ENCODE measurements at regions of chr6 and their contacts with region 1.

Region 1: DNA sequence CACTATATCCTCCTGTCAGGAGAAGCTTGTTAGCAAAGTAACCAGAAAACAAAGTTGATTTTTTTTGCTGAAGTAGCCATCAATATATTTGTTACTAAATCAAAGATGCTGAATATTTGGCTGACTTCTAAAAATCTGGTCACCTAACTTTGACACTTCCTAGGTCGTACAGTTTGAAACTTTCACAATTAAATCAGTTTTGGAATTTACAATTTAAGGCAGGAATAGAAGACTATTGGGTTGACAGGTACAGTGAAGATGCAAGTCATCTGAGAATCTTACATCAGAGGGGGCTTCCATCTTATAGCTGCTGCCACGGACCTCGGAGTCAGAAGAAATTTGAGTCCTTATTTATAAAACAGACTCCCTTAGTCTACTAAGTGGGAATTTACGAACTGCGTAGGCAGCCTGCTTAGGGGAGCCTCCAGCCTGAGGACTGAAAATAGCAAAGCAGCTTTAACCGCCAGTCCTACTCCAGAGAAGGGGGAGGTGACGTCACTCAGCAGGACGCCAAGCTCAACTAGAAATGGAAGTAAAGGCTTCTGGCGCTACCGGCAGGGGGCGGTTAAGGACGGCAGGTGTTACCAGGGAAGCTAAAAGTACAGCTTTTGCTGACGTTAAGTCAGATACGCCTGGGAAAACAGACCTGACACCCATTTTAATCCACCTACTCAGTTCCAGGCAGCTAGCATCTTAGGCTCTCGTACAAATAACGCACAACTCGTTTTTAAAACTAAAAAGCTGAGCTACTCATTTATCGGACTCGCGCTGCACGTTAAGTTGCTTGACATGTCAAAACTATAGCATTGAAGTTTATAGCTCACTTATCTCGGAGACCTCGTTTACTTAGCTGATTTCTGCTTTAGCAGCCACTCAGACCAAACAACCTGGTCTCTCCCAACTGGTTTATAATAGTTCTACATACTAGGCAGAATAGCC is 61.1 kb upstream of the HFE start:
- DNase-seq: peak; percentile 82 to 98 (median 95)
- ATAC-seq: peak; percentile 60
- H3K4me3 ChIP-seq: peak overlapping the region; percentile 75
- H3K4me3 Mint-ChIP-seq: peak overlapping the region; percentile 81 to 99 (median 94)
- H3K27ac ChIP-seq: peak overlapping the region; percentile 94
- H3K27ac Mint-ChIP-seq: peak overlapping the region; percentile 93 to 100 (median 98)
- H3K4me1 ChIP-seq: peaks cover 11 to 22% of the 10 kb centered on the region in 2 donors
- H3K4me1 Mint-ChIP-seq: peaks cover 12 to 81% (median 50%) of the 10 kb centered on the region in 7 donors
- H3K27me3 ChIP-seq: no peaks in the 10 kb centered on the region
- H3K27me3 Mint-ChIP-seq: peaks cover 0 to 9% (median 0%) of the 10 kb centered on the region in 5 donors

Region 2: DNA sequence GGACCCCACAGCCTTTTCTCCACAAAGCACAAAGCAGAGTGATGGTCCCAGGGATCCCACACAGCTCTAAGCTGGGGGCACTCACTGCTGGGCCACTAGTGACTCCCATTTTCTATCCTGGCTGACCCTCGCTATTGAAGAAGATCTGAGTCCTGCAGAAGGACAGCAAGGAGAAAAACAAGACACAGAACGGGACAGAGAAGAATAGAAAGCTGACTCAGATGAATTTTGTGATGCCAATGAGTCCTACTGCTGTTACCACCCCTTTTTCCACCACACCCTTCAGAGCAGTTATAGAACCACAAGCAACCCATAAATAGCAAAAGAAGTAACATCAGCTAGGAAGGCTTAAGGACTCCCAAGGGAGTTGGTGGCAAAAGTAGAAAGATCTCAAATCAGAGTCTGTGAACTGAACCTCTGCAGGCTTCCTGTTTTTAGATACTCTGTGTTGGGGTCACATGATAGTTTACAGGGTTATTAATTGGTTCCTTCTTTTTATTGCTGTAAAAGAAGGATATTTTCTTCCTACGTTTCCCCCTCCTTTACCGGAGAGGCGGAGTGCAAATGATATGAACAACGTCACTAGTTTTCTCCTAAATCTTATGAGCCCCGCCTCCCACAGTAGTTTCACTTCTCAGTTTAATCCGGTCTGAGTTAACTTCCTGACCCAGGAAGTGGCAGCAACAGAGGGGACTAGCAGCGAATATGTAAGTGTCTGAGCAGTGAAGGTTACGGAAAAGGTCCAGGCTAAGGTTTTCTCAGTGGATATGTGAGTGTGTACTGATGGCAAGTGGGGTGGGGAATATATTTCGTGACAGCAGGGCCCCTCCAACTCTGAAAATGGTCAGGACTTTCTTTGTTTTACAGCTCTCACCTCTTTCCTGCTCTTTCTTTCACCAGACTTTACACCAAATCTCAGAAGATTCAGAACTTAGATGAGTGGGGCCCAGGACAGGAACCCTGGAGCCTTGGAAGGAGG is 63.7 kb before region 1 on chr6 and contains the start of gene TRIM38:
- CTCF ChIA-PET with region 1: no interaction called
- POLR2A ChIA-PET with region 1: interaction called, 41 read pairs
- intact Hi-C with region 1: loop called (anchors 1 kb)
- DNase-seq: peak; percentile 22 to 90 (median 85)
- ATAC-seq: peak; percentile 95
- H3K4me3 ChIP-seq: peak within 1 kb of the TSS; percentile 73
- H3K4me3 Mint-ChIP-seq: peak within 1 kb of the TSS; percentile 92 to 100 (median 97)
- H3K27ac ChIP-seq: peak within 1 kb of the TSS; percentile 97
- H3K27ac Mint-ChIP-seq: peak within 1 kb of the TSS; percentile 97 to 100 (median 98)
- H3K4me1 ChIP-seq: peaks cover 61 to 75% of the 10 kb centered on the region in 2 donors
- H3K4me1 Mint-ChIP-seq: peaks cover 61 to 89% (median 84%) of the 10 kb centered on the region in 7 donors
- H3K27me3 ChIP-seq: no peaks in the 10 kb centered on the region
- H3K27me3 Mint-ChIP-seq: no peaks in the 10 kb centered on the region
- total RNA-seq, gene TRIM38: 17.4 to 32.8 (median 29.9) TPM

Region 3: DNA sequence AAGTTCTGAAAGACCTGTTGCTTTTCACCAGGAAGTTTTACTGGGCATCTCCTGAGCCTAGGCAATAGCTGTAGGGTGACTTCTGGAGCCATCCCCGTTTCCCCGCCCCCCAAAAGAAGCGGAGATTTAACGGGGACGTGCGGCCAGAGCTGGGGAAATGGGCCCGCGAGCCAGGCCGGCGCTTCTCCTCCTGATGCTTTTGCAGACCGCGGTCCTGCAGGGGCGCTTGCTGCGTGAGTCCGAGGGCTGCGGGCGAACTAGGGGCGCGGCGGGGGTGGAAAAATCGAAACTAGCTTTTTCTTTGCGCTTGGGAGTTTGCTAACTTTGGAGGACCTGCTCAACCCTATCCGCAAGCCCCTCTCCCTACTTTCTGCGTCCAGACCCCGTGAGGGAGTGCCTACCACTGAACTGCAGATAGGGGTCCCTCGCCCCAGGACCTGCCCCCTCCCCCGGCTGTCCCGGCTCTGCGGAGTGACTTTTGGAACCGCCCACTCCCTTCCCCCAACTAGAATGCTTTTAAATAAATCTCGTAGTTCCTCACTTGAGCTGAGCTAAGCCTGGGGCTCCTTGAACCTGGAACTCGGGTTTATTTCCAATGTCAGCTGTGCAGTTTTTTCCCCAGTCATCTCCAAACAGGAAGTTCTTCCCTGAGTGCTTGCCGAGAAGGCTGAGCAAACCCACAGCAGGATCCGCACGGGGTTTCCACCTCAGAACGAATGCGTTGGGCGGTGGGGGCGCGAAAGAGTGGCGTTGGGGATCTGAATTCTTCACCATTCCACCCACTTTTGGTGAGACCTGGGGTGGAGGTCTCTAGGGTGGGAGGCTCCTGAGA is 61.3 kb after region 1 on chr6 and contains the start of gene HFE:
- CTCF ChIA-PET with region 1: no interaction called
- POLR2A ChIA-PET with region 1: interaction called, 35 read pairs
- intact Hi-C with region 1: no loop called
- DNase-seq: peak in 8 of 9 donors; percentile 32 to 46 (median 38)
- ATAC-seq: peak; percentile 41
- H3K4me3 ChIP-seq: peak within 1 kb of the TSS; percentile 88
- H3K4me3 Mint-ChIP-seq: peak within 1 kb of the TSS; percentile 84 to 91 (median 88)
- H3K27ac ChIP-seq: peak within 1 kb of the TSS; percentile 72
- H3K27ac Mint-ChIP-seq: peak within 1 kb of the TSS; percentile 73 to 91 (median 84)
- H3K4me1 ChIP-seq: peaks cover 18 to 23% of the 10 kb centered on the region in 2 donors
- H3K4me1 Mint-ChIP-seq: peaks cover 31 to 51% (median 39%) of the 10 kb centered on the region in 7 donors
- H3K27me3 ChIP-seq: no peaks in the 10 kb centered on the region
- H3K27me3 Mint-ChIP-seq: peaks cover 0 to 5% (median 5%) of the 10 kb centered on the region in 5 donors
- total RNA-seq, gene HFE: 1.5 to 4.6 (median 2.5) TPM

Region 4: DNA sequence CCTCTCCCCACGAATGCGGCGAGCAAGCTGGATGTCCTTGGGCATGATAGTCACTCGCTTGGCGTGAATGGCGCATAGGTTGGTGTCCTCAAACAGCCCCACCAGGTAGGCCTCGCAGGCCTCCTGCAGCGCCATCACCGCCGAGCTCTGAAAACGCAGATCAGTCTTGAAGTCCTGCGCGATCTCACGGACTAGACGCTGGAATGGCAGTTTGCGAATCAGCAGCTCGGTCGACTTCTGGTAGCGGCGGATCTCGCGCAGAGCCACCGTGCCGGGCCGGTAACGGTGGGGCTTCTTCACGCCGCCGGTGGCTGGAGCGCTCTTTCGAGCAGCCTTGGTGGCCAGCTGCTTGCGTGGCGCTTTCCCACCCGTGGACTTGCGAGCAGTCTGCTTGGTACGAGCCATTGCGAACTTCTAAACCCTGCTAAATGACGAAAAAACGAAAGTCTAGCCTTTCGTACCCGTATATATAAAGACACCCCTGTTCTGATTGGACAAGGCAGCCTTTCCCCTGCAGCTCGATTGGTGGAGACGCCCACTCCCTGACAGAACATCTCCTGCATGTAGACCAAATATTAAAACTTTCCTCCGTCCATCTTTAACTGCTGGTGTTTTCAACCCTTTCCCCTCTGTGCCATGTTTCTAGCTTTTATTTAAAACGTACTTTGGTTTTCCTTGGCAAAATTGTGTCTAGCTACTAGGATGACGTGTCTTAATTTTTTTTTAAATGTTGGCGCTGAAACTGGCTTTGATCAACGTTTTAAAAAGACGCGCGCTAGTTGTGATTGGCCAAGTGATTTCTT is 170.9 kb after region 1 on chr6:
- CTCF ChIA-PET with region 1: interaction called, 3 read pairs
- POLR2A ChIA-PET with region 1: interaction called, 292 read pairs
- intact Hi-C with region 1: no loop called
- DNase-seq: peak; percentile 55 to 95 (median 93)
- ATAC-seq: peak; percentile 73
- H3K4me3 ChIP-seq: peak overlapping the region; percentile 92
- H3K4me3 Mint-ChIP-seq: peak overlapping the region; percentile 85 to 99 (median 96)
- H3K27ac ChIP-seq: peak overlapping the region; percentile 91
- H3K27ac Mint-ChIP-seq: peak overlapping the region; percentile 96 to 100 (median 98)
- H3K4me1 ChIP-seq: peaks cover 10 to 12% of the 10 kb centered on the region in 2 donors
- H3K4me1 Mint-ChIP-seq: peaks cover 23 to 65% (median 42%) of the 10 kb centered on the region in 7 donors
- H3K27me3 ChIP-seq: no peaks in the 10 kb centered on the region
- H3K27me3 Mint-ChIP-seq: peaks cover 0 to 12% (median 0%) of the 10 kb centered on the region in 5 donors

Region 5: DNA sequence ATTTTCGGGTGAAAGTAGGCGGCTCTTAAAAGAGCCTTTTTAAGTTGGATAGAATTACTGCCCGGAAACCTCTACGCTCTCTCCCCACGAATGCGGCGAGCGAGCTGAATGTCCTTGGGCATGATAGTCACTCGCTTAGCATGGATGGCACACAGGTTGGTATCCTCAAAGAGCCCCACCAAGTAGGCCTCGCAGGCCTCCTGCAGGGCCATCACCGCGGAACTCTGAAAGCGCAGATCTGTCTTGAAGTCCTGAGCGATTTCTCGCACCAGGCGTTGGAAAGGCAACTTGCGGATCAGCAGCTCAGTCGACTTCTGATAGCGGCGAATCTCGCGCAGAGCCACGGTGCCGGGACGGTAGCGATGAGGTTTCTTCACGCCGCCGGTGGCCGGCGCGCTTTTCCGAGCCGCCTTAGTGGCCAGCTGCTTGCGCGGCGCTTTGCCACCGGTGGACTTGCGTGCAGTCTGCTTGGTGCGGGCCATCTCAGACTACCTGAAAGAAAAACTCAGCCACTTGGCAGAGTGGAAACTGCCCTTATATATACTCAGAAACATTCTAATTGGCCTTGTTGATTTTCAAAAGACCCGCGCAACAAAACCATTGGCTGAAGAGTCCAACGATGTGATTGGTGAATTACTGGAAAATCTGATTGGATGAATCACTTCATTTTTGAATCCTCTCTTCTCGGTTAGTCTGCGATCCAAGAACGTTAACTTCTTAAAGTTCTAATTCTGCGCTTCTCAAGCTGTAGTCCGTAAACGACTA is 244.9 kb after region 1 on chr6:
- CTCF ChIA-PET with region 1: no interaction called
- POLR2A ChIA-PET with region 1: interaction called, 34 read pairs
- intact Hi-C with region 1: loop called in 1 of 2 experiments (anchors 5 kb)
- DNase-seq: peak; percentile 50 to 89 (median 85)
- ATAC-seq: peak; percentile 24
- H3K4me3 ChIP-seq: peak overlapping the region; percentile 83
- H3K4me3 Mint-ChIP-seq: no peak overlapping the region
- H3K27ac ChIP-seq: peak overlapping the region; percentile 82
- H3K27ac Mint-ChIP-seq: peak overlapping the region in 2 of 9 donors; percentile 10 to 91
- H3K4me1 ChIP-seq: peaks cover 6 to 27% of the 10 kb centered on the region in 2 donors
- H3K4me1 Mint-ChIP-seq: peaks cover 0 to 34% (median 15%) of the 10 kb centered on the region in 7 donors
- H3K27me3 ChIP-seq: no peaks in the 10 kb centered on the region
- H3K27me3 Mint-ChIP-seq: no peaks in the 10 kb centered on the region

Region 6: GRCh38 chr6:27472617-27473400 is 1446.6 kb after region 1 on chr6 and contains the start of gene ZNF184:
- CTCF ChIA-PET with region 1: no interaction called
- POLR2A ChIA-PET with region 1: interaction called, 3 read pairs
- intact Hi-C with region 1: loop called (anchors 2 to 10 kb)
- DNase-seq: peak; percentile 74 to 88 (median 86)
- ATAC-seq: peak; percentile 88
- H3K4me3 ChIP-seq: peak within 1 kb of the TSS; percentile 85
- H3K4me3 Mint-ChIP-seq: peak within 1 kb of the TSS; percentile 85 to 98 (median 97)
- H3K27ac ChIP-seq: peak within 1 kb of the TSS; percentile 93
- H3K27ac Mint-ChIP-seq: peak within 1 kb of the TSS; percentile 90 to 99 (median 96)
- H3K4me1 ChIP-seq: peaks cover 13 to 23% of the 10 kb centered on the region in 2 donors
- H3K4me1 Mint-ChIP-seq: peaks cover 40 to 55% (median 52%) of the 10 kb centered on the region in 7 donors
- H3K27me3 ChIP-seq: no peaks in the 10 kb centered on the region
- H3K27me3 Mint-ChIP-seq: peaks cover 0 to 9% (median 0%) of the 10 kb centered on the region in 5 donors
- total RNA-seq, gene ZNF184: 9.6 to 13.7 (median 12.3) TPM

Region 7: GRCh38 chr6:27871924-27872638 is 1845.9 kb after region 1 on chr6:
- CTCF ChIA-PET with region 1: interaction called, 3 read pairs
- POLR2A ChIA-PET with region 1: interaction called, 34 read pairs
- intact Hi-C with region 1: loop called (anchors 2 to 5 kb)
- DNase-seq: peak; percentile 68 to 97 (median 94)
- ATAC-seq: peak; percentile 88
- H3K4me3 ChIP-seq: peak overlapping the region; percentile 69
- H3K4me3 Mint-ChIP-seq: peak overlapping the region; percentile 83 to 99 (median 94)
- H3K27ac ChIP-seq: peak overlapping the region; percentile 84
- H3K27ac Mint-ChIP-seq: peak overlapping the region; percentile 95 to 98 (median 97)
- H3K4me1 ChIP-seq: peaks cover under 1 to 19% of the 10 kb centered on the region in 2 donors
- H3K4me1 Mint-ChIP-seq: peaks cover 15 to 69% (median 42%) of the 10 kb centered on the region in 7 donors
- H3K27me3 ChIP-seq: no peaks in the 10 kb centered on the region
- H3K27me3 Mint-ChIP-seq: peaks cover 0 to 8% (median 0%) of the 10 kb centered on the region in 5 donors